ENCODE measurements at regions of chr5 and their contacts with region 1.

Region 1: GRCh38 chr5:34898258-34898895 is 16.9 kb downstream of the RAD1 start:
- DNase-seq: peak; percentile 85
- H3K4me3 ChIP-seq: no peak overlapping the region
- H3K27ac ChIP-seq: no peak overlapping the region
- H3K4me1 ChIP-seq: no peaks in the 10 kb centered on the region
- H3K27me3 ChIP-seq: no peaks in the 10 kb centered on the region
- CTCF ChIP-seq: peak; percentile 79 to 83 (median 82)
- POLR2A ChIP-seq: no peak

Region 2: GRCh38 chr5:34474573-34475021 is 423.8 kb before region 1 on chr5:
- intact Hi-C with region 1: loop called (anchors 5 kb)
- DNase-seq: peak; percentile 43
- H3K4me3 ChIP-seq: no peak overlapping the region
- H3K27ac ChIP-seq: no peak overlapping the region
- H3K4me1 ChIP-seq: no peaks in the 10 kb centered on the region
- H3K27me3 ChIP-seq: no peaks in the 10 kb centered on the region
- CTCF ChIP-seq: peak; percentile 87 to 96 (median 95)
- POLR2A ChIP-seq: no peak

Region 3: GRCh38 chr5:34486160-34486848 is 412.1 kb before region 1 on chr5:
- intact Hi-C with region 1: loop called (anchors 5 kb)
- DNase-seq: peak; percentile 95
- H3K4me3 ChIP-seq: no peak overlapping the region
- H3K27ac ChIP-seq: no peak overlapping the region
- H3K4me1 ChIP-seq: peaks cover 11% of the 10 kb centered on the region
- H3K27me3 ChIP-seq: no peaks in the 10 kb centered on the region
- CTCF ChIP-seq: peak; percentile 83 to 89 (median 87)
- POLR2A ChIP-seq: no peak

Region 4: DNA sequence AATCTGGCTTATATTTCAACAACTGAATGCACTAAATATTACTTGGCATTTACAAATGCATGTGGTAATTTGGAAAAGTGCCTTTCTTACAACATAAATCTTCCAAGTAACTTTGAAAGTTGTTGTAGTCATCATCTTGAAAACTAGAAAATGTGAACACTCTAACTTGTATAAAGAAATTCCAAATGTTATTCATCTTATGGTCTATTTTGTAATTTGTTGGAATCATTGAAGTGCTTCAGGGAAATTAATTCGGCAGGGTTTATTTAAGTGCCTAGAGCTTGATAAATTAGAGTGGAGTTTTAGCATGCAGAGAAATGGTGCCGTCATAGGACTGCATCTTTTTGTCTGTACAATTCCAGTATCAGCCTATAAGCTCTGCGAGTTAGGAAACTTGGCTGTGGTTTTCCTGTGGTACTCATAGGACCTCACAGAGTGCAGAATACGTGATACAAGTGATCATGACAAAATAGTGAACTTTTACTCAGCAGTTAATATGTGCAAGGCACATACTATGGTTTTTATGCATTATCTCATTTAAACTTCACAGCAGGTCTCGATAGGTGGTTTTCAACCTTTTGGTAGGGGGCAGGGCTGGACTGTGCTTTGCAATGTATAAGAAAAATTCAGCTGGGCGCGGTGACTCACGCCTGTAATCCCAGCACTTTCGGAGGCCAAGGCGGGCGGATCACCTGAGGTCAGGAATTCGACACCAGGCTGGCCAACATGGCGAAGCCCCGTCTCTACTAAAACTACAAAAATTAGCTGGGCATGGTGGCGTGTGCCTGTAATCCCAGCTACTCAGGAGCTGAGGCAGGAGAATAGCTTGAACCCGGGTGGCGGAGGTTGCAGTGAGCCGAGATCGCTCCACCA is 162.7 kb before region 1 on chr5:
- intact Hi-C with region 1: no loop called
- DNase-seq: no peak
- H3K4me3 ChIP-seq: no peak overlapping the region
- H3K27ac ChIP-seq: no peak overlapping the region
- H3K4me1 ChIP-seq: peaks cover 7% of the 10 kb centered on the region
- H3K27me3 ChIP-seq: no peaks in the 10 kb centered on the region
- CTCF ChIP-seq: no peak
- POLR2A ChIP-seq: no peak

Region 5: DNA sequence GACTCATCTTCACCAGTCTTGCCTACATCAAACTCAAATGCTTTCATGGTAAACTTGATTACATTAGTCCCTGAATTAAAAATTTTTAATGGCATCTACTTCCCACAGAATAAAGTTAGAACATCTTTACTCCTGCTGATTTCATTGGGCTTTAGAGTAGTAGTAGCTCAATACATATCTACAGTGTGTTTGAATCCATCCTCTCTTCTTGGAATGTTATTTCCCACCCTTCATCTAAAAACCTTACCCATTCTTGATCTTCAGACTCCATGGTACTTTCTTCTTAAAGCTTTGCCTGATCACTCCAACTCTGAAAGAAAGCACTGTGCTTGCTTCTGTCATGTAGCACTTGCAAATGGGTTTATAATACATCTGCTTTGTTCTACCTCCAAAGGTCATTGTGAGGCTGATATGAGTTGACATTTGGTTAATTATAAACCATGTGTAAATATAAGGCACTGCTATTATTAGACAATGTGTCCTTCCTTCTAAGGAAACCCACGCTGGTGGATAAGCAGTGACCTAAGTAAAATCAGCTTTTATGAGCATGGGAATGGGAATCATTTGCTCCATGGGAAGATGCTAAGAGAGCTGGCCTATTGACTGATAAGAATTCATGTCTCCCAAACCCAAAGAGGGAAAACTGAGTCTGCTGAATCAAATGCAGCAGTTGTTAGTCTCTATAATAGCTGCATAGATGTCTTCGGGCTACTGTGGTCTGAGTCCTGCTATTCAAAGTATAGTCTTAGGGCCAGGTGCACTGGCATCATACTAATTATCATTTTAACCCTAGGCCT is 339.4 kb after region 1 on chr5:
- intact Hi-C with region 1: no loop called
- DNase-seq: no peak
- H3K4me3 ChIP-seq: no peak overlapping the region
- H3K27ac ChIP-seq: no peak overlapping the region
- H3K4me1 ChIP-seq: no peaks in the 10 kb centered on the region
- H3K27me3 ChIP-seq: no peaks in the 10 kb centered on the region
- CTCF ChIP-seq: no peak
- POLR2A ChIP-seq: no peak

Measured in testis (tissue), 5 donors.